ENCODE measurements at regions of chr9 and their contacts with region 1.

Region 1: GRCh38 chr9:115900699-115901098 is 252.9 kb upstream of the PAPPA start:
- DNase-seq: no peak
- H3K4me3 ChIP-seq: no peak overlapping the region
- H3K27ac ChIP-seq: no peak overlapping the region
- H3K4me1 ChIP-seq: peaks cover 0 to 5% (median 0%) of the 10 kb centered on the region in 4 experiments; a peak in 1 of 7 replicates
- H3K27me3 ChIP-seq: no peaks in the 10 kb centered on the region
- CTCF ChIP-seq: no peak
- EP300 ChIP-seq: no peak
- POLR2A ChIP-seq: no peak
- RAD21 ChIP-seq: no peak

Region 2: GRCh38 chr9:115883457-115884329 is 17.0 kb before region 1 on chr9:
- CTCF ChIA-PET with region 1: interaction called, 11 read pairs
- POLR2A ChIA-PET with region 1: interaction called, 3 read pairs
- DNase-seq: no peak
- H3K4me3 ChIP-seq: no peak overlapping the region
- H3K27ac ChIP-seq: no peak overlapping the region
- H3K4me1 ChIP-seq: no peaks in the 10 kb centered on the region
- H3K27me3 ChIP-seq: no peaks in the 10 kb centered on the region
- CTCF ChIP-seq: peak; percentile 73 to 82 (median 77)
- EP300 ChIP-seq: no peak
- POLR2A ChIP-seq: no peak
- RAD21 ChIP-seq: peak; percentile 86 to 91